Activated T-helper 2 cell treated with anti-CD3 and anti-CD28 coated beads, Interferon-gamma antibody, Interleukin-2, Interleukin-4, amounts not matched to agents 10 μg/mL and 5 μg/mL and 100 μg/mL, durations not matched to agents 14 hours and 24 hours and 36 hours (primary cell): ENCODE measurements at regions of chr4 and their contacts with region 1.

Region 1: DNA sequence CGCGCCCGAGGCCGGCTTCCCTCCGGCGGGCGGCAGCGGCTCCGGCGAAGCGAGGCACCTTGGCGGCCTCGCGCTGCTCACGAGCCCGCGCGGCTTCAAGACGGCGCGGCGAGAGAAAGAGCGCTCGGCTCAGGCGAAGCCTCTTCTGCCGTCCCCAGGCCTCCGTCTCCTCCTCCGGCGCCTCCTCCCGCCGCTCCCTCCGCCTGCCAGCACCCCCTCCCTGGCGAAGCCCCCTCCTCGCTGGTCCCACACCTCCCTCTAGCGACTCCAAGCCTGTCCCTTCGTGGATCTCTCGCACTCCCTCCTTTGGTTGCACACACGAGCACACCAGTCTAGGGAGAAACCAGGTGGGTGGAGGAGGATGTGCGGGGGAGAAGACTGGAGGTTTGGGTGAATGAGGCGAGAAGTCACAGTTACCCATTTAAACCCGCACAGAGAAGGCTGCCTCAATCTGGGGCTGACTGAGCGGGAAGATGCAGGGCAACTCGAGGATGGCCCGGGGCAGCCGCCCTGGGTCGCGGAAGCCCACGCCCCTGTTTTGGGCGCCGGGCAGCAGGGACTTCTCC is at the start of gene CAMK2D:
- DNase-seq: peak; percentile 77
- H3K4me3 Mint-ChIP-seq: peak within 1 kb of the TSS; percentile 93
- H3K27ac Mint-ChIP-seq: peak within 1 kb of the TSS; percentile 92
- H3K4me1 Mint-ChIP-seq: peaks cover 47% of the 10 kb centered on the region
- H3K27me3 Mint-ChIP-seq: no peaks in the 10 kb centered on the region
- total RNA-seq, gene CAMK2D: 58.4 and 61.3 TPM in 2 replicates

Region 2: GRCh38 chr4:113146876-113147358 is 614.8 kb before region 1 on chr4:
- intact Hi-C with region 1: loop called (anchors 5 kb)
- DNase-seq: no peak
- H3K4me3 Mint-ChIP-seq: peak overlapping the region; percentile 75
- H3K27ac Mint-ChIP-seq: peak overlapping the region; percentile 89
- H3K4me1 Mint-ChIP-seq: peaks cover 26% of the 10 kb centered on the region
- H3K27me3 Mint-ChIP-seq: peaks cover 6% of the 10 kb centered on the region

Region 3: DNA sequence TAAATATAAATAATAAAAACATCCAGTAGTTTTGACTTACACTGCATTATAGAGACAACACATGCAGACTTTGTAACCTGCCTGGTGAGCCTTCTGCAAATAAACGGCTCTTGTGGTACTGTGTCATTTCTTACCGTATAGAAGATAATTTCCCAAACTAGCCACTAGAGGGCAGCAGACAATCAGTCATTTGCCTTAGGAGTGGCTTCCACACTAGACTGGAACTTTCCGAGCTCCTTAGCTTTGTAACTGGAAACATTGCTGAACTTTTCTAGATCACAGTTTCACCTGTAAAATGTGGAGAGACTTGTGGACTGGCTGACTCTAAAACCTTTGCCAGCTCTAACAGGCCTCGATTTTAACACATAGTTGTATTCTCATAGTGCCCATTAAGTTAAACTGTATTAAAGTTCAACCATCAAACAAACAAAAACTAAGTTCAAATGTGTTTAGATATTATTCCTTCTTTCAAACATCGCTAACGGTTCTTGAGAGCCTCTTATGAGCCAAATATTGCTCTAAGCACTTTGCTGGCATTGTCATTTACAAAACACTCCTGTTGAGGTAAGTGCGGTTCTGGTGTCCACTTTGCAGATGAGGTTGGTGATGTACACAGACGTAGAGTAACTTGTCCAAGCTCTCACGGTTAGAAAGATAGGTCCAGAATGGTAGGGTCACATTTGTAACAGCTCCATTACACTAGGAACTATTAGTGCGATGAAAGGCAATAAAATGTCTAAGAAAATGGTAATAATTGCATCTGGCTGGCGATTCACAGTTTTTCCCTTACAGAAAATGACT is 366.8 kb before region 1 on chr4:
- intact Hi-C with region 1: loop called (anchors 1 kb)
- DNase-seq: peak; percentile 44
- H3K4me3 Mint-ChIP-seq: no peak overlapping the region
- H3K27ac Mint-ChIP-seq: no peak overlapping the region
- H3K4me1 Mint-ChIP-seq: peaks cover 3% of the 10 kb centered on the region
- H3K27me3 Mint-ChIP-seq: peaks cover 7% of the 10 kb centered on the region

Region 4: DNA sequence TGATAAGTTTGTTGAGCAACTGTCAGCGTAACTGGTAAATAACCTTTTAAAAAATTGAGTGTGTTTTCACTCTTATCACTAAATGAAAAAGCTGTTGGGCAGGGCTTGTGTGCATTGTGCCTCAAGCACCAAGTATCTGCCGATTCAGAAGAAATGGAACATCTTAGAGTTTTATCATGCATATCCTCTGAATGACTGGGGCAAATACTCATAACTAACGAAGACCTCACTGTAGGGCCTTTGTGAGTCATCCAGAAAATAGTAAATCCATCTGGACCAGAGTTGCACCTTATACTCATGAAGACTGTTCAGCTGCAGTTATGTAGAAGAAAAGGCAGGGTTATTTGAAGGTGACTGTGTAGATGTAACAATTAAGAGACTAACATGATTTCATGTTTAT is 222.3 kb before region 1 on chr4:
- intact Hi-C with region 1: loop called (anchors 1 kb)
- DNase-seq: no peak
- H3K4me3 Mint-ChIP-seq: no peak overlapping the region
- H3K27ac Mint-ChIP-seq: peak overlapping the region; percentile 85
- H3K4me1 Mint-ChIP-seq: peaks cover 45% of the 10 kb centered on the region
- H3K27me3 Mint-ChIP-seq: no peaks in the 10 kb centered on the region

Region 5: DNA sequence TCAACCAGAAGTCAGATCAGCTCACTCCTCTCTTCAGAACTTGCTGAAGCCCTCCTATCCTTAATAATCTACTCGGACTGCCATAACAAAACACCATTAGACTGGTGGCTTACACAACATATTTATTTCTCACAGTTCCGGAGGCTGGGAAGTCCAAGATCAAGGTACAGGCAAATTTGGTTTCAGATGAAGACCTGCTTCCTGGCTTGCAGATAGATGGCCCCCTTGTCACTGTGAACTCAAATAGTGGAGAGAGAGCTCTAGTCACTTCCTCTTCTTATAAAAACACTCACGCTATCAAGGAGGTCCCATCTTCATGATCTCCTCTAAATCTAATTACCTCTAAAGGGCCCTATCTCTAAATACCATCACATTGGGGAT is 125.3 kb before region 1 on chr4:
- intact Hi-C with region 1: loop called (anchors 1 kb)
- DNase-seq: no peak
- H3K4me3 Mint-ChIP-seq: peak overlapping the region; percentile 45
- H3K27ac Mint-ChIP-seq: peak overlapping the region; percentile 63
- H3K4me1 Mint-ChIP-seq: peaks cover 47% of the 10 kb centered on the region
- H3K27me3 Mint-ChIP-seq: no peaks in the 10 kb centered on the region

Region 6: DNA sequence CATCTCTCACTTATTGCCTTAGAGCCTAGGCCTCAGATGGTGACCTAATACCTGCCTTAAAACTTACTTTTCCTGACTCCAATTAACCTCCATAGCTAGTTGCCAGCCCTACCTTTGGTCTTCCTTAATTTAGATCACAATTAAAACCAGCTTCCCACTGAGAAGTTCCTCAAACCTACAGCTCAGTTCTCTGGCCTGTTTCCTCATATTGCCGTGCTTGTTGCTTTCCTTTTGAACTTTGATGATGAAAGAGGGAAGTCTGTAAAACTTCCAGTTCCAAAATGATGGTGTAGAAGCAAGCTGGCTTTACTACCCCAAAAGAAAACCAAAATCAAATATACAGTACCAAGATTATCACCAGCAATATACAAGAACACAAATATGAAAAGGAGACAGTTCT is 28.8 kb after region 1 on chr4:
- intact Hi-C with region 1: no loop called
- DNase-seq: no peak
- H3K4me3 Mint-ChIP-seq: no peak overlapping the region
- H3K27ac Mint-ChIP-seq: no peak overlapping the region
- H3K4me1 Mint-ChIP-seq: no peaks in the 10 kb centered on the region
- H3K27me3 Mint-ChIP-seq: peaks cover 2% of the 10 kb centered on the region

Region 7: DNA sequence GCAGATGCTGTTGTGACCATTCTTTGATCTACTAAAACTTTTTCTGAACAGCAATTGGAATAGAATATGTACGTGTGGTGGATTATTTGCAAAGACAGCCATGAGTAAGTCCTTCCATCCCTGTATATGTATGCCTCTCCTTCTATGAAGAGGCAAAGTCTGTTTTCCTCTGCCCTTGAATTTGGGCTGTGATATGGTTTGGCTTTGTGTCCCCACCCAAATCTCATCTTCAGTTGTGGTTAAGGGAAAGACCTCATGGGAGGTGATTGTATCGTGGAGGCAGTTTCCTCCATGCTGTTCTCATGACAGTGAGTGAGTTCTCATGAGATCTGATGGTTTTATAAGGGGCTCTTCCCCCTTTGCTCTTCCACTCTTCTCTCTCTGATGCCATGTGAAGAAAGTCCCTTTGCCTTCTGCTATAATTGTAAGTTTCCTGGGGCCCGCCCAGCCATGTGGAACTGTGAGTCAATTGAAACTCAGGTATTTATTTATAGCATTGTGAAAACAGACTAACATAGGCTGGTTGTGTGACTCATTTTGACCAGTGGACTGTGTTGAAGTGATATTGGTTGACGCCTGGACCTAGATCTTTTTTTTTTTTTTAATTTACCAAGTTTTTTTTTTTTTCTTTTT is 108.2 kb after region 1 on chr4:
- intact Hi-C with region 1: loop called (anchors 1 kb)
- DNase-seq: no peak
- H3K4me3 Mint-ChIP-seq: no peak overlapping the region
- H3K27ac Mint-ChIP-seq: peak overlapping the region; percentile 85
- H3K4me1 Mint-ChIP-seq: peaks cover 5% of the 10 kb centered on the region
- H3K27me3 Mint-ChIP-seq: no peaks in the 10 kb centered on the region